Mammary epithelial cell (primary cell): ENCODE measurements at regions of chr18 and their contacts with region 1.

Region 1: DNA sequence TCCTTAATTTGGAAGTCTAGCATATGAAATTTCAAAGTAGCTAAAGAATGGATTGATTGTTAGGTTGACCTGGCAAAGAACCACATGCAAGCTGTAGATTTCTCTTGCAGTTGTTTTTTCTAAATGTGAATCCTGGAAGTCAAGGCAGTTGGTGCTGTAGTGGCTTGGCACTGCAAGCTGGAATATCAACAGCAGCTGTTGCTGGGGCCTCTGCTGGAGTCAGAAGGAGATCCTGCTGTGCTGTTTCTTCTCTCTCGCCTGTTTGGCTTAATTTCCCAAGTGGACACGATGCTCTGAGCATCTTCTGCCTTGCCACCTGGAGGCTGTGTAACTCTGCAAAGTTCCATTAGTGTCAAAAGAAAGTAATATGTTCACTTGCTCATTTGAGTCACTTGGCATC is 12.6 kb downstream of the PIK3C3 start:
- DNase-seq: no peak
- H3K4me3 ChIP-seq: no peak overlapping the region
- H3K27ac ChIP-seq: no peak overlapping the region
- H3K4me1 ChIP-seq: no peaks in the 10 kb centered on the region
- H3K27me3 ChIP-seq: no peaks in the 10 kb centered on the region
- CTCF ChIP-seq: no peak

Region 2: DNA sequence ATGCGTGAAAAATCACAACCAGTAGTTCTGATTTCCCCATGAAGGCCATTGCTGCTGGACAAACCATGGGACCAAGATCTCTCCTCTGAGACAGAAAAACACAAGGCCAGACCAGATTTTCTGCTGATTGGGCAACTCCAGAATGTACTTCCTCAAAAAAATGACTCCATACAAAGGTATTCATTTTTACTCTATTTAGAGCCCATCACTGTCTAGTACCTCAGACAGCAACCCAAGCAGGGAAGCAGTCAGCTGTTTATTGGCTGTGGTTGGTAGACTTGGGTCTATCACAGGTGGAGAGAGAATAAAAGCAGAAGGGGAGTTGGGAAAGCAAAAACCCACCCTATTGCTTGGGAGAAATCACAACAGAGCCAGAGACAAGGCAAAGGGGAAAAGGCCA is 207.2 kb after region 1 on chr18:
- CTCF ChIA-PET with region 1: no interaction called
- dilution Hi-C with region 1: no loop called
- in situ Hi-C with region 1: no loop called
- intact Hi-C with region 1: loop called (anchors 5 kb)
- DNase-seq: peak; percentile 61
- H3K4me3 ChIP-seq: no peak overlapping the region
- H3K27ac ChIP-seq: no peak overlapping the region
- H3K4me1 ChIP-seq: no peaks in the 10 kb centered on the region
- H3K27me3 ChIP-seq: peaks cover 2% of the 10 kb centered on the region
- CTCF ChIP-seq: no peak